Activated T-helper 2 cell treated with anti-CD3 and anti-CD28 coated beads, Interferon-gamma antibody, Interleukin-2, Interleukin-4, amounts not matched to agents 10 μg/mL and 5 μg/mL and 100 μg/mL, durations not matched to agents 14 hours and 24 hours and 36 hours (primary cell): ENCODE measurements at regions of chr16 and their contacts with region 1.

Region 1: DNA sequence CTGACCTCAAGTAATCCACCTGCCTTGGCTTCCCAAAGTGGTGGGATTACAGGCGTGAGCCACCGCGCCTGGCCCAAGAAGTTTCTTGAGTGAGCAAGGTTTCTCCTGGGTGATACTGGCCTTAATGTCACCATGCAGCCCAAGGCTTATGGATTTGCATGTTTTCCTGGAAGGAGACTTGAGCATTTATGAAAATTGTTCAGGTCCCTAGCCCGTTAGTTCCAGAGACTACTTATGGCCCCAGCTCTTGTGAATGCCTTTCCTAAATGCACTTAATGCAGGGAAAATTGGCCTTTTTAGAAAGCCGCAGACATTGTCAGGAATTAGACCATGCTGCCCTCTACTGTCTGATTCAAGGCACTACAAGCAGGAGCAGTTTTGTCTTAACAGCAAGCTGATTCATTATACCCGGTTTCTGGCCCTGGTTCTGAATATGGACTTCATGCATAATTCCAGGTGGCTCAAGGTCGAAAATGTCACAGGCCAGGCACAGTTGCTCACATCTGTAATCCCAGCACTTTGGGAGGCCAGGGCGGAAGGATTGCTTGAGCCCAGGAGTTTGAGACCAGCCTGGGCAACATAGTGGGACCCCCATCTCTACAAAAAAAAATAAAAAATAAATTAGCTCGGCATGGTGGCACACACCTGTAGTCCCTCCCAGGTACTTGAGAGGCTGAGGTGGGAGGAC is 91.3 kb downstream of the SNX29 start:
- DNase-seq: peak; percentile 47
- H3K4me3 Mint-ChIP-seq: no peak overlapping the region
- H3K27ac Mint-ChIP-seq: no peak overlapping the region
- H3K4me1 Mint-ChIP-seq: no peaks in the 10 kb centered on the region
- H3K27me3 Mint-ChIP-seq: no peaks in the 10 kb centered on the region

Region 2: DNA sequence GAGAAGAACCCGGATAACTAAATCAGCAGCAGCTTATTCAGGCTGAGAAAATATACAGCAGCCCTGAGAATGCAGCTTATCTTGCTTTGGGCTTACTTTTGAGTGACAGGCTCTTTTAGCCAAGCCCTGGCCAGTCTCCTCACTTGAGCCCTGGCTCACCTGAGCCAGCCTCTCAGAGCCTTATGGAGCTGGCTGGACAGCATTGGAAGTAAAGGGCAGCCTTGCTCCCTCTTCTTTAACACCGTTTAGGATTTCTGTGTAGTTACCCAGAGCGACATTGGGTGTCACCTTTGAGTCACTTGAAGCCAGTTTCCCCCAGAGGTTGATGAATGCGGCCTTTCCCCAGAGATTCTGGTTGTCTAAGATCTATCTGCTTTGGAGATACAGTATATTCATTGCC is 118.3 kb before region 1 on chr16:
- intact Hi-C with region 1: loop called (anchors 1 kb)
- DNase-seq: no peak
- H3K4me3 Mint-ChIP-seq: no peak overlapping the region
- H3K27ac Mint-ChIP-seq: no peak overlapping the region
- H3K4me1 Mint-ChIP-seq: no peaks in the 10 kb centered on the region
- H3K27me3 Mint-ChIP-seq: no peaks in the 10 kb centered on the region

Region 3: DNA sequence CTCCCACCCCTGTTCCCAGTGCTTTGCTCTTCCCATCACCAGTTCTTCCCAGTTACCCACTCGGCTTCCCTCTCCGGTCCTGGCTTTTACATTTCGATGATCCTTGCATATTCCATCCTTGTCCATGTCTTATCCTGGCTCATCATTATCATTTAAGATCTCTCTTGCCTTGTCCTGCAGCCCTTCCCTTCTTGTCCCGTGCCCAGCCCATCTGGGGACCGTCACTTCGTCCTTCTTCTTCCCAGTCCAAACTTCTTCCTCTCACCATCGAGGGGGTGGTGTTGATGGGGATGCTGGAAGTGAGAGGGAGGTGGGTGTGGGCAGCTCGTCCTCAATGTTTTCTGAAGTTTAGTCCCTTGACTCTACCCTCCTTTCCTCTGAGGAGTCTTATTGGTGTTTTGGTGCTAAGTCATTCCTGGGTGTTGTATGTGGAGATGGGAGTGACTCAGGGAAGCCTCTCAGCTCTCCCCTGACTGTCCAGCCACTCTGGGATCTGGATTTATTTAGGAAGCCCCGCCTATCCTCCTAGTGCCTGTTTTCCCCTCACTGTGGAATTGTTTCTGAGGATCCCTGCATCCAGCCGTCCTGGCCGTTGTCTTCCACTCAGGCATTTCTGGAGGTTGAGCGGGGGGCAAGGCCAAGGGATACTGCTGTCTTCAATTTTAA is 90.3 kb before region 1 on chr16:
- intact Hi-C with region 1: loop called (anchors 10 kb)
- DNase-seq: no peak
- H3K4me3 Mint-ChIP-seq: peak overlapping the region; percentile 96
- H3K27ac Mint-ChIP-seq: peak overlapping the region; percentile 43
- H3K4me1 Mint-ChIP-seq: peaks cover 24% of the 10 kb centered on the region
- H3K27me3 Mint-ChIP-seq: no peaks in the 10 kb centered on the region